Activated T-helper 1 cell treated with anti-CD3 and anti-CD28 coated beads, Interleukin-12 subunit alpha, Interleukin-12 subunit beta, Interleukin-2, Interleukin-4 antibody, amounts not matched to agents 30 ng/mL and 10 ng/mL and 1 ng/mL, durations not matched to agents 14 hours and 24 hours and 36 hours (primary cell): ENCODE measurements at regions of chr20 and their contacts with region 1.

Region 1: GRCh38 chr20:56554869-56555268 is 21.8 kb downstream of the FAM209B start:
- DNase-seq: no peak
- H3K4me3 Mint-ChIP-seq: no peak overlapping the region
- H3K27ac Mint-ChIP-seq: peak overlapping the region; percentile 24
- H3K4me1 Mint-ChIP-seq: peaks cover 9% of the 10 kb centered on the region
- H3K27me3 Mint-ChIP-seq: peaks cover 5% of the 10 kb centered on the region

Region 2: DNA sequence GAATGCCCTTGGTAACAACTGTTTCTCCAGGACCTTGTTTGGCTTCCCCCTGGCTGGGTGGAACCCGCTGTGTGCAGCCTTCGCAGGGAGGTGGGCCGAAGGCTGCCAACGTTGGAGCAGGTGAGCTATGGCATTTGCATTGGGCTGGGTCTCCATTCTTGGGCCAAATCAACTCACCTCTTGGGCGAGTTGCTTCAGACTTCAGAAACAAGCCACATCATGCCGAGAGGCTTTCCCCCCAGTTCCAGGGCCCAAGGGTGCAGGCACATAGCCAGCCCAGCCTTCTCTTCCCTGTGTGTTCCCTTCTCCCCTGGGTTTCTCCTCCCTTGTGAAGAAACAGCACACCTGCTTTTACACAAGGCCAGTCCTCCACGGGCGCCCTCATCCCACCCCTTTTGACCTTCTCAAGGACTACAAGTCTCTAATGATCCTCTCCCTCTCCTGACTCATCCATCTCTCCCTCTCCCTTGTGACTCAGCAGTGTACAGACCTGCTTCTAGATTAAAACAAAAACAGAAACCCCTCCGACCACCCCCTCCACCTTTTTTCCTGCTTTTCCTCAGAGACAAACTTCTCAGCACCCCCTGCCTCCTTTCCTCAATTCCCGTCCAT is 19.8 kb after region 1 on chr20:
- intact Hi-C with region 1: loop called (anchors 1 kb)
- DNase-seq: no peak
- H3K4me3 Mint-ChIP-seq: no peak overlapping the region
- H3K27ac Mint-ChIP-seq: no peak overlapping the region
- H3K4me1 Mint-ChIP-seq: no peaks in the 10 kb centered on the region
- H3K27me3 Mint-ChIP-seq: peaks cover 4% of the 10 kb centered on the region

Region 3: GRCh38 chr20:56808732-56809131 is 253.9 kb after region 1 on chr20:
- intact Hi-C with region 1: no loop called
- DNase-seq: no peak
- H3K4me3 Mint-ChIP-seq: no peak overlapping the region
- H3K27ac Mint-ChIP-seq: no peak overlapping the region
- H3K4me1 Mint-ChIP-seq: no peaks in the 10 kb centered on the region
- H3K27me3 Mint-ChIP-seq: peaks cover 8% of the 10 kb centered on the region

Region 4: DNA sequence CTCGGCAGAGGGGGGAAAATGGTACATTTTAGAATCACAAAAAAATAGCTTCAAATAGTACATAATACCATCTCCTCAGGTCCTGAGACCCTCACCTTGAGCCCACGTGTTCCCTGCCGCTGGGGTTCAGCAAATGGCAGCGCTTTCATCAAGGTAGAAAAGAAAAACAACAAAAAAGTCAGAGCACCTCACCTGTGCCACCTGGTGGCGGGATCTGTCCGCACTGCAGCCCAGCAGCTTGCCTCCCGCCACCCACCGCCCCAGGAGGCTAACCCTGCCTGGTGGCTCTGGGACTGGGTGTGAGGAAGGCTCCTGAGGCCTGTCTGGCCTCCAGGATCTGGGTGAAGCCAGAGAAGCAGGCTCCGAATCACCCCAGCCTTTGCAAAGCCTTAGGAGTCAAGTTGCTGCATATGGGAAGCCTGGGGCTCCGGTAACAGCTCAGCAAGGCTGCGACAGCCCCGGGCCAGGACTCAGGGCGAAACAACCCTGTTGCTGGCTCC is 440.8 kb after region 1 on chr20:
- intact Hi-C with region 1: loop called (anchors 2 kb)
- DNase-seq: no peak
- H3K4me3 Mint-ChIP-seq: no peak overlapping the region
- H3K27ac Mint-ChIP-seq: no peak overlapping the region
- H3K4me1 Mint-ChIP-seq: no peaks in the 10 kb centered on the region
- H3K27me3 Mint-ChIP-seq: no peaks in the 10 kb centered on the region

Region 5: DNA sequence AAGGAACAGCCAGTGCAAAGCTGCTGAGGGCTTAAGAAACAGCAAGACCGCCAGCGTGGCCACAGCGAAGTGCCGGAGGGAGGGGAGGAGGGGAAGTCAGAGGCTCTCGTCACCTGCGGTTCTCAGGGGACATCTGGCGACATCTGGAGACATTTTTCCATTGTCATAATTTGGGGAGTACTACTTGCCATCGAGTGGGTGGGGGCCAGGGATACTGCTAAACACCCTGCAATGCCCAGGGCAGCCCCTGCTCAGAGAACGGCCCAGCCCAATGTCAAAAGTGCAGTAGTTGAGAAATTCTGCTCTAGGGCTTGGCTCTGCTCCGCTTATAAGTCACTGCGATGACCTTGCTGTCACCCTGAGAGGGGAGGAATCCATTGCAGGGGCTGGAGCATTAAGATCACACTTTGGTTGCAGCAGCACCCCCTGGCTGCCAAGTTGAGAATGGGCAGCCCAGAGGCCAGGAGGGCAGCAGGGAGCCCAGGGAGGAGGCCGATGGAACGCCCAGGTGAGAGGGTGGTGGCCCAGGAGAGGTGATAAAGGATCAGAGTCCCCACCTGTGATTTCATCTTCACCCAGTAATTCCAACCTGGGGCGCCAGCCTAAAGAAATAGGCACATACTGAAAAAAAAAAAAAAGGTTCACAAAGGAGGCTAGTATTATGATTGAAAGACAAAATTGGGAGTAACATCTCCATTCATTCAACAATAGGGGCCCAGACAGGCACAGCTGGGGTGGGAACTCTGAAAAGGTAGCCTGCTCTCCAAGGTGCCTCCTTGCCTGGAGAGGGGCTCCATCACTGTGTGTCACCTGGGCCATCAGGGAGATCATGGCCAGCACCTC is 493.4 kb after region 1 on chr20:
- intact Hi-C with region 1: loop called (anchors 1 kb)
- DNase-seq: no peak
- H3K4me3 Mint-ChIP-seq: no peak overlapping the region
- H3K27ac Mint-ChIP-seq: no peak overlapping the region
- H3K4me1 Mint-ChIP-seq: no peaks in the 10 kb centered on the region
- H3K27me3 Mint-ChIP-seq: no peaks in the 10 kb centered on the region